Activated CD4-positive, alpha-beta memory T cell treated with anti-CD3 and anti-CD28 coated beads for 36 hours (primary cell): ENCODE measurements at regions of chr9 and their contacts with region 1.

Region 1: GRCh38 chr9:136902259-136902821 is 16.0 kb downstream of the TRAF2 start:
- DNase-seq: peak; percentile 95
- H3K4me3 Mint-ChIP-seq: peak overlapping the region; percentile 70
- H3K27ac Mint-ChIP-seq: peak overlapping the region; percentile 98
- H3K4me1 Mint-ChIP-seq: peaks cover 51% of the 10 kb centered on the region
- H3K27me3 Mint-ChIP-seq: no peaks in the 10 kb centered on the region

Region 2: DNA sequence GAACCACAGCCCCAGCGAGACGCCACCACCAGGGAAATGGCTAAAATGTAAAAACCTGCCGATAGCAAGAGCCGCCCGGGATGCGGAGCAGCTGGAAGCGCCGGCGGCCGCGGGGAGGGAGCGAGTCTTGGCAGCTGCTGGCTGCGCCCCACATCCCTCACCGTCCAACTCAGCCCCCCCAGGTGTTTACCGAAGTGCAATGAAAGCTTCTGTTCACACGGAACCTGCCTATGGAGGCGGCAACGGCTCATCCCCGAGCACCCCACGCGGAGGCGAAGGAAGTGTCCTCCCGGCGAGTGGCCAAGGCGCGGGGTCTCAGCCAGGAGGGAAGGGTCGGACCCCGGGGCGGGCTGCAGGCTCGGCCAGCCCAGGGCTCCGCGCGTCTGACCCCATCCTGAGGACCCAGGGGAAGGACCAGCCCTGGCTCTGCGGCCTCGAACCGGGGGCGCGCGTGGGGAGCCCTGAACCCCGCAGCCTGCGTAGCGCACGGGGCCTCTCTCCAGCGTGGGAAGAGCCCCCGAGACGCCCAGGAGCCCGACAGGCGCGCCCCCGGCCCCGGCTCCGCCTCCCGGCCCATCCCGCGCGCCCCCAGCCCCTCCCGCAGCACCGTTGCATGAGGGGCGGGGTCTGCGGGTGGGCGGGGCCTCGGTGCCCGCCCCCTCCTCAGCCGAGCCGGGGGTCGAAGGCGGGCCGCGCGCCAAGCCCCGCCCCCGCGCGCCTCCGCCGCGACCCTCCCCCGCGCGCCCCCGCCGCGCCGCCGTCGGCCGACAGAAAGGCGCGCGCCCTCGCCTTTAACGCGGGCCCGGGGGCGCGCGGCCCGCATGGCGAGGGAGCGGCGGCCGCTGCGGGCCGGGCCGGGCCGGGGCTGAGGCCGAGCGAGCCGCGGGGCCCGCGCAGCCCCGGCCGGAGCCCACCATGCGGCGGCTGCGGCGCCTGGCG is 190.3 kb before region 1 on chr9 and contains the start of gene DIPK1B:
- CTCF ChIA-PET with region 1: no interaction called
- POLR2A ChIA-PET with region 1: no interaction called
- intact Hi-C with region 1: no loop called
- DNase-seq: no peak
- H3K4me3 Mint-ChIP-seq: peak within 1 kb of the TSS; percentile 23
- H3K27ac Mint-ChIP-seq: no peak within 1 kb of the TSS
- H3K4me1 Mint-ChIP-seq: no peaks in the 10 kb centered on the region
- H3K27me3 Mint-ChIP-seq: peaks cover 29% of the 10 kb centered on the region
- total RNA-seq, gene DIPK1B: not detected

Region 3: DNA sequence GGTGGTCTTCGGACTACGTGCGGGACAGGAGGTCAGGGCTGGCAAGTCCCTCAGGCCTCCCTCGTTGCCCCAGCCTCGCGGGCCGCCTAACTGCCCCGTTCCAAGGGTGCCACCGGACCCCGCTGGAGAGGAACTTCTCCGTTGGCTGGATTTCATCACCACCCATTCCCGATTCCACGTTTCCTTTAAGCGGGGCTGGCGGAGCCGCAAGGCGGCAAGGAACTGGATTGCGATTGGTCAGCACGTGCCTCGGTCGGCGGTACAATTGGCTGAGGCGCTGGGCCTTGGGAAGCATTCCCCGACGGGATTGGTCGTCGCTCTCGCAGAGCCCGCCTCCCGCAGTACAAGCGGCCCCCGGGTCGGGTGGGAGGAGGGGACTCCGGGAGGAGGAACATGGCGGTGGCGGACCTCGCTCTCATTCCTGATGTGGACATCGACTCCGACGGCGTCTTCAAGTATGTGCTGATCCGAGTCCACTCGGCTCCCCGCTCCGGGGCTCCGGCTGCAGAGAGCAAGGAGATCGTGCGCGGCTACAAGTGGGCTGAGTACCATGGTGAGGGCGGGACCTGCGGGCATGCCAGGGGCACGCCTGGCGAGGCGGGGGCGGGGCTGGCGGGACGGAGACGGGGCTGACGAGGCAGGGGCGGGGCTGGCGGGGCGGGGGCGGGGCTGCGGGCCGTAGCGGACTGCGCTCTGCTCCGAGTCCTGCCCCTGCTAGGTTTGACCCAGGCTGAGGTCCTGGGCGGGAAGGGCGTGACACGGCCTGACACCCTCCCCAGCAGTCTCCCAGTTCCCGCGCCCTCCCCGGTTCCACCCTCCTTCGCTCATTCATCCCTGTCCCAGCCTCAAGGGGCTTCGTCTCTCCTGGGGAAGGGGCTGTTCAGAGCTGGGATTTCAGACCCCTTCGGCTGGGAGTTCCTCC is 53.0 kb before region 1 on chr9 and contains the start of gene PHPT1:
- CTCF ChIA-PET with region 1: interaction called, 16 read pairs
- POLR2A ChIA-PET with region 1: interaction called, 6 read pairs
- intact Hi-C with region 1: loop called (anchors 2 kb)
- DNase-seq: peak; percentile 98
- H3K4me3 Mint-ChIP-seq: peak within 1 kb of the TSS; percentile 85
- H3K27ac Mint-ChIP-seq: peak within 1 kb of the TSS; percentile 90
- H3K4me1 Mint-ChIP-seq: peaks cover 19% of the 10 kb centered on the region
- H3K27me3 Mint-ChIP-seq: peaks cover 17% of the 10 kb centered on the region
- total RNA-seq, gene PHPT1: 92.2 to 95.5 TPM

Region 4: DNA sequence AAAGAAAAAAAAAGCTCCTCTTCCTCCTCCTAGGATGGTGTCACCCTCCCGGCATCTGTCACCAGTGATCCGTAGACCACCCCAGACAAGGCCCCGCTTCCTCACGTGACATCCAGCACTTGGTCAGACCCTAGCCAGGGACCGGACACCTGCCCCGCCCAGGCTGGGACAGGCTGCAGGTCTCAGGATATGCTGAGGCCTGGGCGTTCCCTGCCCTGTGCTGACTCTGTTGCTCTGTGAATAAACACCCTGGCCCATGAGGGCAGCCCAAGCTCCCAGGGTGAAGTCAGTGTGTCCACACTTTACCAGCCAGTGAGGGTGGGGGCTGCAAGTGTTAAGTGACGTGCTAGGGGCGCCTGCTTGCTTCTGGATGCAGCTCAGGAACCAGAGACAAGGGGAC is 41.8 kb before region 1 on chr9:
- CTCF ChIA-PET with region 1: no interaction called
- POLR2A ChIA-PET with region 1: no interaction called
- intact Hi-C with region 1: no loop called
- DNase-seq: no peak
- H3K4me3 Mint-ChIP-seq: no peak overlapping the region
- H3K27ac Mint-ChIP-seq: no peak overlapping the region
- H3K4me1 Mint-ChIP-seq: peaks cover 15% of the 10 kb centered on the region
- H3K27me3 Mint-ChIP-seq: no peaks in the 10 kb centered on the region

Region 5: DNA sequence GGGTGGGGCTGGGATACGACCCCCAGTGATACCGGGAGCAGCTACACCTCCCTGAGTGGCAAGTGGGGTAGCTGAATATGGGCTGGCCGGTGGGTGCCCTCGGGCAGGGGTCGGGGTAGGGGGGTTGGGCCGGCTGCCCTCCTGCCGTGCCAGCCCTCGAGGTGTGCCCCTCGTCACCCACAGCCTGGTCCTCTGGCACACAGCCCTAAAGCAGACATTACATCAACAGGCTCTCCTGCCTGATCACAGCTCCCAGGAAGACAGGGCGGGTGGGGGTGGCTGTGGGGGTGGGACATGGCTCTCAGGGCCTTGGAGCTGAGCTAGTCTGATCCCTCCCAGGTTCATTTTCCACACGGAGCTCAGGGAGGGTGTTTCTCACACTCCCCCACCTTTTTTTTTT is 19.0 kb after region 1 on chr9:
- CTCF ChIA-PET with region 1: no interaction called
- POLR2A ChIA-PET with region 1: no interaction called
- intact Hi-C with region 1: no loop called
- DNase-seq: no peak
- H3K4me3 Mint-ChIP-seq: no peak overlapping the region
- H3K27ac Mint-ChIP-seq: no peak overlapping the region
- H3K4me1 Mint-ChIP-seq: peaks cover 3% of the 10 kb centered on the region
- H3K27me3 Mint-ChIP-seq: no peaks in the 10 kb centered on the region

Region 6: DNA sequence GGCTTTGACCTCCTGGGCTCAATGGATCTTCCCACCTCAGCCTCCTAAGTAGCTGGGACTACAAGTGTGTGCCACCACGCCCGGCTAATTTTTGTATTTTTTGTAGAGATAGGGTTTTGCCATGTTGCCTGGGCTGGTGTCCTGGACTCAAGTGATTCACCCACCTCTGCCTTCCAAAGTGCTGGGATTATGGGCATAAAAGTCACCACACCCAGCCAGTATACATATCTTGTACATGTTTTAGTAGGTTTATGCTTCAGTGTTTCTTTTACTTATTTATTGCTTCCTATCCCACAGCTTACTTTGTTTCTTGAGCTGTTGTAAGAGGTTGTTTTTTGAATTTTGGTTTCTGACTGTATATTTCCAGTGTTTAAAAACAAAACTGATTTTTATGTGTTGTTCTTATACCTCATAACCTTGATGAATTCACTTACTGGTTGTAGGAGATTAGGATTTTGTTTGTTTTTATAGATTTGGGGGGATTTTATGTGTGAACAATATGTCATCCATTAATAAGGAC is 29.3 kb after region 1 on chr9:
- CTCF ChIA-PET with region 1: no interaction called
- POLR2A ChIA-PET with region 1: interaction called, 3 read pairs
- intact Hi-C with region 1: loop called (anchors 2 kb)
- DNase-seq: no peak
- H3K4me3 Mint-ChIP-seq: no peak overlapping the region
- H3K27ac Mint-ChIP-seq: peak overlapping the region; percentile 73
- H3K4me1 Mint-ChIP-seq: peaks cover 27% of the 10 kb centered on the region
- H3K27me3 Mint-ChIP-seq: no peaks in the 10 kb centered on the region